ENCODE measurements at regions of chr6 and their contacts with region 1.

Region 1: GRCh38 chr6:35342258-35343091 is at the start of gene PPARD:
- DNase-seq: peak; percentile 97 to 99
- H3K4me3 ChIP-seq: peak within 1 kb of the TSS; percentile 99
- H3K27ac ChIP-seq: peak within 1 kb of the TSS; percentile 94 to 95
- H3K4me1 ChIP-seq: peaks cover 0 to 43% (median 17%) of the 10 kb centered on the region in 4 donors
- H3K27me3 ChIP-seq: peaks cover 0 to 7% of the 10 kb centered on the region in 2 donors
- CTCF ChIP-seq: peak; percentile 99

Region 2: DNA sequence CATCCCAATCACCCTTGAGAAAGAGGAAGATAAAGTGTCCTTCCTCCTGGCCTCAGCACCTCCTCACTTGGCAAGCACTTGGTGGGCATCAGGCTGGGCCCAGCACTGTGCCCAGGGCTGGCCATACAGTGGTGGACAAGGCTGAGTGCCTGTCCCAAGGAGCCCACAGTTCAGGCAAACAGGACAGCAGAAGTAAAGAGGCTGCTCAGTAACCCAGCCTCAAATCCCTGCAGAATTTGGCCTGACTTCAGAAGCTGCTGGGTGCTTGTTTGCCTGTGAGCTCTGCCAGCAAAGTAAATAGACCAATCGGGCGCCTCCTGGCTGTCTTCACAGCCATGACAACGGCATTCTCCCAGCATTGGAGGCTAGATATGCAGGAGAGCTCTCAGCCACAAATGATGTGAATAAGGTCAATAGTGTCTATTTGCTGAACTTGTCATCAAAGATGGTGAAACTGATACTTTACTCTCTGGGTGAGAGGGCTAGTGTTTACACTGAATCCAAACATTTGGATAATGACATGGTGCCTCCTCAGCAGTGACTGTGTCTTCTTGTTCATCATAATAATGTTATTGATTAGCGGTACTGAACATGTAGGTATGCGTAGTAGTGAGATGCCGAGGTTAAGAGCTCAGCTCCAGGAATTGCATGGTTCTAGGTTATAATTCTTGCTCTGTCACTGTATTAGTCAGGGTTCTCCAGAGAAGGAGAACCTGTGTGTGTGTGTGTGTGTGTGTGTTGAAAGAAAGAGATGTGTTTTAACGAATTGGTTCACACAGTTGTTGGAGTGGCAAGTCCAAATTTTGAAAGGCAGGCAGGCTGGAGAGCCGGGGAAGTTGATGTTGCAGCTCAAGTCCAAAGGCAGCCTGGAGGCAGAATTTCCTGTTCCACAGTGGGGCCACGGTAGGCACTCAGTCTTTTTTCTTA is 72.9 kb after region 1 on chr6:
- intact Hi-C with region 1: loop called (anchors 10 kb)
- DNase-seq: peak; percentile 64 to 81
- H3K4me3 ChIP-seq: no peak overlapping the region
- H3K27ac ChIP-seq: no peak overlapping the region
- H3K4me1 ChIP-seq: peaks cover 0 to 7% (median 6%) of the 10 kb centered on the region in 4 donors
- H3K27me3 ChIP-seq: no peaks in the 10 kb centered on the region
- CTCF ChIP-seq: peak; percentile 52 to 61

Region 3: GRCh38 chr6:35427851-35428321 is 85.4 kb after region 1 on chr6:
- intact Hi-C with region 1: no loop called
- DNase-seq: no peak
- H3K4me3 ChIP-seq: no peak overlapping the region
- H3K27ac ChIP-seq: no peak overlapping the region
- H3K4me1 ChIP-seq: no peaks in the 10 kb centered on the region
- H3K27me3 ChIP-seq: no peaks in the 10 kb centered on the region
- CTCF ChIP-seq: no peak

Region 4: GRCh38 chr6:35449287-35449881 is 106.9 kb after region 1 on chr6:
- intact Hi-C with region 1: loop called (anchors 2 kb)
- DNase-seq: no peak
- H3K4me3 ChIP-seq: no peak overlapping the region
- H3K27ac ChIP-seq: no peak overlapping the region
- H3K4me1 ChIP-seq: peaks cover 4 to 25% (median 17%) of the 10 kb centered on the region in 4 donors
- H3K27me3 ChIP-seq: no peaks in the 10 kb centered on the region
- CTCF ChIP-seq: peak; percentile 72

Region 5: DNA sequence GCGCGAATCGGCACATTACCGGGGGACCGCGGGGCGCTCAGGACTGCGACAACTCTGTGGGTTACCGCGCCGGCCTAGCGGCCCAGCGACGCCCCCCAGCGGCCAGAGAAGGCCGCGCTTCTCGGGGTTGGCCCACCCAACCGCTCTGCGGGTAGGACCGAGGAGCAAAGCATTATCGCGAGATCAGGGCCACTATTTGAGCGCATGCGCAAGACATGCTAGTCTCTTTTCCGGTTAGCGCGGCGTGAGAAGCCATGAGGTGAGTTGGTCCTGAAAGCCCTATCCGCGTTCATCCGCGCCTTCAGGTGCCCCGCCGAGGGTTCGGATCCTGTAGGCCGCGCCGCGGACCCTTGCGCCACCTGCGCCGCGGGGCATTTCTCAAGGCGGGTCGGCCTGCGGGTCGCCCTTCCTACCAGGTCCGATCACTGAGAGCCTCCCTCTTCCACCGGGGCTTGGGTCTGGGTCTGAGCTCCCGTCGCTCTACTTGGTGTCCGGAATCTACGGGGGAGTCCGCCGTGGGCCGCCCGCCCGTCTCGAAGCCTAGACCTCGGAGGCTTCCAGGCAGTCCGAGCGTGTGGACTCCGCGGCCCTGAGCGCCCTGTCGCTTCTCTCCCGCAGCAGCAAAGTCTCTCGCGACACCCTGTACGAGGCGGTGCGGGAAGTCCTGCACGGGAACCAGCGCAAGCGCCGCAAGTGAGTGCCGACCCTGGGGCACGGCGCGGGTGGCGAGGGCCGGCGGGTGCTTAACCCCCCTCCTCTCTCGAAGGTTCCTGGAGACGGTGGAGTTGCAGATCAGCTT is 125.9 kb after region 1 on chr6 and contains the start of gene RPL10A:
- intact Hi-C with region 1: loop called (anchors 5 kb)
- DNase-seq: peak; percentile 93 to 98
- H3K4me3 ChIP-seq: peak within 1 kb of the TSS; percentile 63 to 80
- H3K27ac ChIP-seq: peak within 1 kb of the TSS; percentile 83 to 86
- H3K4me1 ChIP-seq: peaks cover 0 to 44% (median 26%) of the 10 kb centered on the region in 4 donors
- H3K27me3 ChIP-seq: no peaks in the 10 kb centered on the region
- CTCF ChIP-seq: peak; percentile 96 to 98

Region 6: GRCh38 chr6:35731736-35732532 is 389.5 kb after region 1 on chr6:
- intact Hi-C with region 1: loop called (anchors 10 kb)
- DNase-seq: peak; percentile 97 to 99
- H3K4me3 ChIP-seq: peak overlapping the region; percentile 59 to 74
- H3K27ac ChIP-seq: peak overlapping the region; percentile 97 to 99
- H3K4me1 ChIP-seq: peaks cover 6 to 94% (median 70%) of the 10 kb centered on the region in 4 donors
- H3K27me3 ChIP-seq: no peaks in the 10 kb centered on the region
- CTCF ChIP-seq: peak; percentile 6 to 24

Measured in tibial artery (tissue), 4 donors.